Calu3 (cell line): ENCODE measurements at regions of chr14 and their contacts with region 1.

Region 1: GRCh38 chr14:58072288-58073071 is 79.5 kb downstream of the ARMH4 start:
- DNase-seq: peak; percentile 63
- H3K4me3 Mint-ChIP-seq: no peak overlapping the region
- H3K27ac Mint-ChIP-seq: no peak overlapping the region
- H3K4me1 Mint-ChIP-seq: no peaks in the 10 kb centered on the region
- H3K27me3 Mint-ChIP-seq: peaks cover 24% of the 10 kb centered on the region
- CTCF ChIP-seq: peak; percentile 30

Region 2: GRCh38 chr14:57871459-57872080 is 200.9 kb before region 1 on chr14:
- CTCF ChIA-PET with region 1: no interaction called
- intact Hi-C with region 1: loop called (anchors 5 kb)
- DNase-seq: peak; percentile 57
- H3K4me3 Mint-ChIP-seq: no peak overlapping the region
- H3K27ac Mint-ChIP-seq: no peak overlapping the region
- H3K4me1 Mint-ChIP-seq: peaks cover 9% of the 10 kb centered on the region
- H3K27me3 Mint-ChIP-seq: peaks cover 30% of the 10 kb centered on the region
- CTCF ChIP-seq: peak; percentile 59

Region 3: DNA sequence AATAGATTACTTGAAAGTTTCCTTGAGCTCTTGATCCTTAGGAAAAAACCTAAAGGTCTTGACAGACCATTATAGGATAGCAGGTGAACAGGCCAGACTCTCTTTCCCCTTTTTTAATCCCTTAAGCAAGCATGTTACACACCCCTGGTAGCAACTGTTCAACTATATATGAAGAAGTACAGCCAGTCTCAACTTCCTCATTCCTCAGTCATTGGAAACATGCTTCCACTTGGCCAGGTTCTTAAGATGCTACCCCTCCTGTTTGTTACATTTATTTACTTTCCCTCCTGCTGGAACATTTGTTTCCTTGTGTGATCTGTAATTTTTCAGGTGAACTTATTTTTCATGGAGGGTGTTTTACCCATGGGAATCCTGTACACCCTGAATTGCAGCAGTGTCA is 44.6 kb before region 1 on chr14:
- CTCF ChIA-PET with region 1: no interaction called
- intact Hi-C with region 1: no loop called
- DNase-seq: no peak
- H3K4me3 Mint-ChIP-seq: no peak overlapping the region
- H3K27ac Mint-ChIP-seq: no peak overlapping the region
- H3K4me1 Mint-ChIP-seq: peaks cover 13% of the 10 kb centered on the region
- H3K27me3 Mint-ChIP-seq: no peaks in the 10 kb centered on the region
- CTCF ChIP-seq: no peak